GM12878 (cell line): ENCODE measurements at regions of chr9 and their contacts with region 1.

Region 1: GRCh38 chr9:121322037-121322775 is 47.8 kb downstream of the STOM start:
- DNase-seq: no peak
- ATAC-seq: no peak
- H3K4me3 ChIP-seq: no peak overlapping the region
- H3K27ac ChIP-seq: no peak overlapping the region; the same call in 1 of the 2 replicates
- H3K4me1 ChIP-seq: peaks cover 9% of the 10 kb centered on the region
- H3K27me3 ChIP-seq: no peaks in the 10 kb centered on the region
- CTCF ChIP-seq: no peak
- EP300 ChIP-seq: no peak
- POLR2A ChIP-seq: no peak
- RAD21 ChIP-seq: no peak

Region 2: DNA sequence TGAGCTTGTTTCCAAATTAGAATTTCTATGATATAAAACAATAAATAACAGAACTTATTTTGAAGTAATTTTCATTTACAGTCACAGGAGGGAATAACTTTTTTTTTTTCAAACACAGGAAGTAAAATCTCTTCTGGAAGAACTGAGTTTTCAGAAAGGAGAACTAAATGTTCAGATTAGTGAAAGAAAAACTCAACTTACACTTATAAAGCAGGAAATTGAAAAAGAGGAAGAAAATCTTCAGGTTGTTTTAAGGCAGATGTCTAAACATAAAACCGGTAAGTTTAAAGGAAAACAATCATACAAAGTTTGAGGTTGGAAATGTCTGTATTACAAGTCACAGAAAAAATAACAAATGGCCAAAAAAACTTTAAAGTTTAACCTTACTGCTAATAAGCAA is 162.2 kb before region 1 on chr9:
- CTCF ChIA-PET with region 1: no interaction called
- POLR2A ChIA-PET with region 1: no interaction called
- RAD21 ChIA-PET with region 1: no interaction called
- SMC1A ChIA-PET with region 1: no interaction called
- in situ Hi-C with region 1: no loop called
- intact Hi-C with region 1: no loop called
- DNase-seq: no peak
- ATAC-seq: no peak
- H3K4me3 ChIP-seq: no peak overlapping the region
- H3K27ac ChIP-seq: peak overlapping the region; percentile 37
- H3K4me1 ChIP-seq: peaks cover 20% of the 10 kb centered on the region
- H3K27me3 ChIP-seq: no peaks in the 10 kb centered on the region
- CTCF ChIP-seq: no peak
- EP300 ChIP-seq: no peak
- POLR2A ChIP-seq: no peak
- RAD21 ChIP-seq: no peak

Region 3: GRCh38 chr9:121213136-121213806 is 108.9 kb before region 1 on chr9:
- CTCF ChIA-PET with region 1: interaction called, 80 read pairs
- POLR2A ChIA-PET with region 1: no interaction called
- RAD21 ChIA-PET with region 1: interaction called, 17 read pairs
- SMC1A ChIA-PET with region 1: interaction called, 17 read pairs
- in situ Hi-C with region 1: loop called (anchors 5 kb)
- intact Hi-C with region 1: loop called (anchors 1 kb)
- DNase-seq: no peak
- ATAC-seq: peak; percentile 63
- H3K4me3 ChIP-seq: no peak overlapping the region
- H3K27ac ChIP-seq: no peak overlapping the region
- H3K4me1 ChIP-seq: peaks cover 5% of the 10 kb centered on the region
- H3K27me3 ChIP-seq: no peaks in the 10 kb centered on the region
- CTCF ChIP-seq: peak; percentile 92 to 96 (median 96); a peak in 5 of 6 replicates
- EP300 ChIP-seq: no peak
- POLR2A ChIP-seq: no peak
- RAD21 ChIP-seq: peak; percentile 90

Region 4: GRCh38 chr9:121340676-121341392 is 18.6 kb after region 1 on chr9:
- CTCF ChIA-PET with region 1: interaction called, 33 read pairs
- POLR2A ChIA-PET with region 1: no interaction called
- RAD21 ChIA-PET with region 1: interaction called, 3 read pairs
- SMC1A ChIA-PET with region 1: interaction called, 13 read pairs
- in situ Hi-C with region 1: no loop called
- intact Hi-C with region 1: no loop called
- DNase-seq: no peak
- ATAC-seq: peak; percentile 93
- H3K4me3 ChIP-seq: no peak overlapping the region
- H3K27ac ChIP-seq: no peak overlapping the region
- H3K4me1 ChIP-seq: peaks cover 3% of the 10 kb centered on the region; the same call in 1 of the 2 replicates
- H3K27me3 ChIP-seq: no peaks in the 10 kb centered on the region
- CTCF ChIP-seq: no peak
- EP300 ChIP-seq: no peak
- POLR2A ChIP-seq: no peak
- RAD21 ChIP-seq: no peak

Region 5: GRCh38 chr9:121362813-121363621 is 40.8 kb after region 1 on chr9:
- CTCF ChIA-PET with region 1: interaction called, 16 read pairs
- POLR2A ChIA-PET with region 1: no interaction called
- RAD21 ChIA-PET with region 1: no interaction called
- SMC1A ChIA-PET with region 1: interaction called, 7 read pairs
- in situ Hi-C with region 1: no loop called
- intact Hi-C with region 1: no loop called
- DNase-seq: no peak
- ATAC-seq: no peak
- H3K4me3 ChIP-seq: no peak overlapping the region
- H3K27ac ChIP-seq: no peak overlapping the region
- H3K4me1 ChIP-seq: peaks cover 18% of the 10 kb centered on the region
- H3K27me3 ChIP-seq: no peaks in the 10 kb centered on the region
- CTCF ChIP-seq: no peak
- EP300 ChIP-seq: no peak
- POLR2A ChIP-seq: no peak
- RAD21 ChIP-seq: no peak

Region 6: DNA sequence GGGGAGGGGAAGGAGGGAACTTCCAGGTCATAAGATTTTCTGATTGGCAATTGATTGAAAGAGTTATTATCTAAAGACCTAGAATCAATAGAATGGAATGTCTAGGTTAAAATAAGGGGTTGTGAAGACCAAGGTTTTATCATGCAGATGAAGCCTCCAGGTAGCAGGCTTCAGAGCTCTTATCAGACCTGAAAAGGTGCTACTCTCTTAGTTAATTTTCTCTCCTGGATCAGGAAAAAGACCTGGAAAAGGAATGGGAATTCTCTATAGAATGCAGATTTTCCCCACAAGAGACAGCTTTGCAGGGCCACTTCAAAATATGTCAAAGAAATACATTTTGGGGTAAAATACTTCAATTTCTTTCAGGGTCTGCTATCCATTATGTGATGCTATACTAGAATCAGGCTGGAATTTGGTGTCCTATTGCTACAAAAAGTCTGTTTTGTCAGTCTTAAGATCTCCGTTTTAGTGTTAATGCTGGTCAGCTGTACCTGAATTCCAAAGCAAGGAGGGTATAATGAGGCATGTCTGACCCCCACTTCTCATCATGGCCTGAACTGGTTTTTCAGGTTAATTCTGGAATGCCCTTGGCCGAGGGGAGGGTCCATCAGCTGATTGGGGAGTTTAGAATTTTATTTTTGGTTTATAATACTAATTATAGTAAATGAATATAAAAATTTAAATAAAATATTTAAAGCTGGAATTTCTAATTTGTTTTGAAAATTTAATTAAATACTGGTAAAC is 64.4 kb after region 1 on chr9:
- CTCF ChIA-PET with region 1: interaction called, 173 read pairs
- POLR2A ChIA-PET with region 1: no interaction called
- RAD21 ChIA-PET with region 1: interaction called, 4 read pairs
- SMC1A ChIA-PET with region 1: interaction called, 83 read pairs
- in situ Hi-C with region 1: no loop called
- intact Hi-C with region 1: no loop called
- DNase-seq: no peak
- ATAC-seq: no peak
- H3K4me3 ChIP-seq: no peak overlapping the region
- H3K27ac ChIP-seq: no peak overlapping the region
- H3K4me1 ChIP-seq: no peaks in the 10 kb centered on the region
- H3K27me3 ChIP-seq: no peaks in the 10 kb centered on the region
- CTCF ChIP-seq: no peak
- EP300 ChIP-seq: no peak
- POLR2A ChIP-seq: no peak
- RAD21 ChIP-seq: no peak

Region 7: GRCh38 chr9:121399883-121400607 is 77.8 kb after region 1 on chr9:
- CTCF ChIA-PET with region 1: interaction called, 318 read pairs
- POLR2A ChIA-PET with region 1: no interaction called
- RAD21 ChIA-PET with region 1: interaction called, 106 read pairs
- SMC1A ChIA-PET with region 1: interaction called, 147 read pairs
- in situ Hi-C with region 1: loop called (anchors 5 kb)
- intact Hi-C with region 1: loop called (anchors 1 kb)
- DNase-seq: peak; percentile 26
- ATAC-seq: peak; percentile 80
- H3K4me3 ChIP-seq: no peak overlapping the region
- H3K27ac ChIP-seq: no peak overlapping the region
- H3K4me1 ChIP-seq: no peaks in the 10 kb centered on the region
- H3K27me3 ChIP-seq: no peaks in the 10 kb centered on the region
- CTCF ChIP-seq: peak; percentile 33 to 68 (median 46); a peak in 5 of 6 replicates
- EP300 ChIP-seq: no peak
- POLR2A ChIP-seq: no peak
- RAD21 ChIP-seq: peak; percentile 79